Natural killer cell (primary cell): ENCODE measurements at regions of chr5 and their contacts with region 1.

Region 1: GRCh38 chr5:96957254-96958049 is 21.6 kb downstream of the LNPEP start:
- DNase-seq: peak in 1 of 2 donors; percentile 44
- ATAC-seq: peak; percentile 75 to 87 (median 76)
- H3K4me3 ChIP-seq: no peak overlapping the region
- H3K4me3 Mint-ChIP-seq: peak overlapping the region; percentile 67
- H3K27ac ChIP-seq: peak overlapping the region; percentile 59
- H3K27ac Mint-ChIP-seq: peak overlapping the region; percentile 81 to 95
- H3K4me1 ChIP-seq: peaks cover 38% of the 10 kb centered on the region
- H3K4me1 Mint-ChIP-seq: peaks cover 63 to 65% of the 10 kb centered on the region in 2 donors
- H3K27me3 ChIP-seq: no peaks in the 10 kb centered on the region
- H3K27me3 Mint-ChIP-seq: no peaks in the 10 kb centered on the region
- CTCF ChIP-seq: no peak

Region 2: DNA sequence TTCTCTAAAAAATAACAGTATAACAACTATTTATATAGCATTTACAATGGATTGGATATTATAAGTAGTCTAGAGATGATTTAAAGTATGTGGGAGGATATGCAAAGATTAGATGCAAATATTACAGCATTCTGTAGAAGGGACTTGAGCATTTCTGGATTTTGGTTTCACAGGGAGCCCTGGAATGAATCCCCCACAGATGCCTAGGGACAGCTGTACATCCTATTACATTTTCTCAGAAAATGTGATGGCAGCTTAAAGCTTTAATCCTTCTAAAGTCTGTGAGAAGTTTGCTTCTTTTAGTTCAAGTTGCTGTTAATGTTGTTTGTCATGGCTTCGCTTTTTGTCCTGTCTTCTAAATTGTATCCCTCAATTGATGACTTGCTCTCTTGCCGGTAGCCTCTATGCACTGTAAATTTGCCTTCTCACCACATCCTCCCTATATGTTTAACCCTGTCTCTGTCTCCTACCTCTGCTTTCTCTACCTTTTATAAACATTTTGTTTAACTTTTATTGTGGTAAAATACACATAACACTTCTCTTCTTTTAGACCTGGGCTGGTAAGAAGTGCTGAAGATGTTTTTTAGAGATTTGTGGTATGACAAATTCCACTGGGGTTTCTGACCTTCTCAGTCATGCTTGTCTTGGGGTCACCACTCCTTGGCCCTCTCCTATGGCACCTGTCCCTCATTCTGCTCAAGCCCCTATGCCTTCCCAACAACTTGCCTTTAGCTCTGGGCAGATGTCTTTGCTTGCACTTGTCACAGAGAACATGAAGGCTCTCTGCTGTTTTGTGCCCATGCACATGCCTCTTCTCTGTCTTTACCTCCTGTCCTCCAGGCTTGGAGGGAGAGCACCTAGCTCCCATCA is 16.3 kb after region 1 on chr5:
- intact Hi-C with region 1: loop called (anchors 2 kb)
- DNase-seq: peak in 1 of 2 donors; percentile 45
- ATAC-seq: peak; percentile 68 to 77 (median 71)
- H3K4me3 ChIP-seq: no peak overlapping the region
- H3K4me3 Mint-ChIP-seq: peak overlapping the region; percentile 82
- H3K27ac ChIP-seq: peak overlapping the region; percentile 24
- H3K27ac Mint-ChIP-seq: peak overlapping the region; percentile 82 to 94
- H3K4me1 ChIP-seq: peaks cover 16% of the 10 kb centered on the region
- H3K4me1 Mint-ChIP-seq: peaks cover 64 to 85% of the 10 kb centered on the region in 2 donors
- H3K27me3 ChIP-seq: no peaks in the 10 kb centered on the region
- H3K27me3 Mint-ChIP-seq: no peaks in the 10 kb centered on the region
- CTCF ChIP-seq: no peak

Region 3: DNA sequence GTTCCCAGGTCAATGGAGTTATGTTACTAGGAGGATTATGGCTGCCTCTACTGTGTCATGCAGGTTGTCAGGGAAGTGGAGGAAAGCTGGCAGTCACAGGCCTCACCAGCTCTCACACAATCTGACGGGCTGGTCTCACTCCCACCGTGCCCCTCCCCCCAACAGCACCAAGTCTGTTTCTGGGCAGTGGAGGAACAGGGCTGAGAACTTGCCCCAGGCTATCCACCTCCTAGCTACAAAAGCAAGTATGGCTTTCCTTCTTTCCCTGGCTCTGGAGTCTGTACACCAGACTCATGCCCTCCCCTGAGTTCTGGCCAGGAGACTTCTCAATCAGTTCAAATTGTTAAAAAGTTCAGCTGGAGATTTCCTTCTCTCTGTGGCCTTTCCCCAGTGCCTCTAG is 251.3 kb after region 1 on chr5:
- intact Hi-C with region 1: no loop called
- DNase-seq: no peak
- ATAC-seq: no peak
- H3K4me3 ChIP-seq: no peak overlapping the region
- H3K4me3 Mint-ChIP-seq: no peak overlapping the region
- H3K27ac ChIP-seq: no peak overlapping the region
- H3K27ac Mint-ChIP-seq: no peak overlapping the region
- H3K4me1 ChIP-seq: no peaks in the 10 kb centered on the region
- H3K4me1 Mint-ChIP-seq: no peaks in the 10 kb centered on the region
- H3K27me3 ChIP-seq: no peaks in the 10 kb centered on the region
- H3K27me3 Mint-ChIP-seq: peaks cover 20 to 24% of the 10 kb centered on the region in 2 donors
- CTCF ChIP-seq: no peak